A549 (cell line): ENCODE measurements at regions of chr4 and their contacts with region 1.

Region 1: GRCh38 chr4:150010525-150011126 is 67.6 kb upstream of the DCLK2 start:
- DNase-seq: peak; percentile 31 to 78
- ATAC-seq: peak; percentile 90 to 92
- H3K4me3 ChIP-seq: no peak overlapping the region
- H3K27ac ChIP-seq: peak overlapping the region; percentile 64 to 83
- H3K4me1 ChIP-seq: peaks cover 46% of the 10 kb centered on the region
- CTCF ChIP-seq: peak; percentile 59
- EP300 ChIP-seq: no peak
- POLR2A ChIP-seq: no peak
- RAD21 ChIP-seq: peak; percentile 70 to 74

Region 2: GRCh38 chr4:150209140-150209829 is 198.7 kb after region 1 on chr4:
- CTCF ChIA-PET with region 1: interaction called, 29 read pairs
- POLR2A ChIA-PET with region 1: no interaction called
- DNase-seq: peak; percentile 52 to 69
- ATAC-seq: peak; percentile 77 to 91
- H3K4me3 ChIP-seq: no peak overlapping the region
- H3K27ac ChIP-seq: peak overlapping the region in 1 of 2 experiments; percentile 29; a peak in 2 of 6 replicates
- H3K4me1 ChIP-seq: peaks cover 45% of the 10 kb centered on the region
- CTCF ChIP-seq: peak; percentile 49
- EP300 ChIP-seq: no peak
- POLR2A ChIP-seq: no peak
- RAD21 ChIP-seq: peak; percentile 62 to 65

Region 3: GRCh38 chr4:150217192-150217591 is 206.6 kb after region 1 on chr4:
- CTCF ChIA-PET with region 1: interaction called, 70 read pairs
- POLR2A ChIA-PET with region 1: no interaction called
- DNase-seq: peak in 1 of 2 experiments; percentile 68
- ATAC-seq: peak; percentile 85 to 87
- H3K4me3 ChIP-seq: no peak overlapping the region
- H3K27ac ChIP-seq: peak overlapping the region; percentile 62 to 70; a peak in 5 of 6 replicates
- H3K4me1 ChIP-seq: peaks cover 61% of the 10 kb centered on the region
- CTCF ChIP-seq: peak; percentile 53
- EP300 ChIP-seq: no peak
- POLR2A ChIP-seq: no peak
- RAD21 ChIP-seq: peak; percentile 65 to 69